Posterior cingulate gyrus (tissue), 11 donors: ENCODE measurements at regions of chr17 and their contacts with region 1.

Region 1: GRCh38 chr17:17792551-17793377 is 44.0 kb downstream of the SREBF1 start:
- DNase-seq: peak in 6 of 10 donors; percentile 60 to 95 (median 80)

Region 2: GRCh38 chr17:17445925-17446665 is 346.7 kb before region 1 on chr17:
- intact Hi-C with region 1: no loop called
- DNase-seq: no peak

Region 3: GRCh38 chr17:17694169-17695081 is 98.3 kb before region 1 on chr17:
- intact Hi-C with region 1: loop called (anchors 5 kb)
- DNase-seq: peak; percentile 63 to 97 (median 75)